ENCODE measurements at regions of chr2 and their contacts with region 1.

Region 1: GRCh38 chr2:210673117-210673516 is 116.7 kb downstream of the CPS1 start:
- DNase-seq: no peak
- CTCF ChIP-seq: no peak

Region 2: DNA sequence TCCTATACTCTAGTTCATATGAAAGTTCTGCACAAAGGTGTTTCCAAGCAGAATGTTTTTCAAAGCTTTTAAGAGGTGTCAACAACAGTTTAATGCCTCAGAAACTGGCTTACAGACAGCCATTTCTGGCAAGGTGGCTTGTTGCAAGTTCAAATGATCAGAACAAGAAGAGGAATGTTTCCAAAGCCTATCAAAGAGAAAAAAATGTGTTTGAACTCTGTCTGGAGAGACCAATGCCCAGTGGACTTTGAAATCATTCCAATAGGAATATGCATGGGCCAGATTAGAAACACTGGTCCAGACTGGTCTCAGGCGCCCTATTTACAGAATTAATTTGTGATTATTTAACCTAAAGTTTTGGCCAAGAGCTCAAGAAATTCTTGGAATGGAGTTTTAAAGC is 10.6 kb before region 1 on chr2:
- CTCF ChIA-PET with region 1: interaction called, 11 read pairs
- POLR2A ChIA-PET with region 1: no interaction called
- DNase-seq: no peak
- CTCF ChIP-seq: no peak

Measured in GM10248 (cell line).